Stomach (tissue), 19 donors: ENCODE measurements at regions of chr4 and their contacts with region 1.

Region 1: DNA sequence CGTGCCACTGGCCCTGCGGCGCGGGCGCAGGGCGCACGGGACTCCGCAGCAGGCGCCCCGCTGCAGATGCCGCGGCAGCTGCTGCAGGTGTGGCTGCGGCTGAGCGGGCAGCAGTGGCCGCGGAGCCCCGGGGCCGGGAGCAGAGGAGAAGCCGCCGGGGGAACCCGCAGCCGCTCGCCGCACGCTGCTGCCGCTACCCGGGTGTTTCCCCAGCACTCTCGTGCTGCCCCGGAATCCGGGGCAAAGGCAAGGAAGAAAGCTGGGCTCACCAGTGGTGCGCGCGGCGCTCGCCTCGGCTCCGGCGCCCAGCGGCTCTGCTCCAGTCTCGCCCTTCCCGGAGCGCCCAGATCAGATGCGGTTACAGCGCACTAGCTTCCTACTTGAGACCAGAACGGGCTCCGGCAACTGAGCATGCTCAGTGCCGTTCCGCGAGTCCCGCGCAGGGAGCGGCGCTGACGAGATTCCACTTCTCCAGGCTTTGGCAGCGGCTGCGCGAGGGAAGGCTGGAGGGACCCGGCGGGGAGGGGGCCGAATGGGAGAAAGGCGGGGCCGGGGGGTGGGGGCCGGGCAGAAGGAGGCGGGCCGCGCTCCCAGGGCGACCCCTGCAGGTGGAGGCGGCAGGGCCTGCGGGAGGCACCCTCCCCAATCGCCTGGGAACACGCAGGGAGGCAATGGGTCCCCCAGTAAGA is at the start of gene APBB2:
- DNase-seq: peak; percentile 94 to 99
- H3K4me3 ChIP-seq: peak within 1 kb of the TSS; percentile 81 to 96 (median 92)
- H3K27ac ChIP-seq: peak within 1 kb of the TSS; percentile 84 to 95 (median 90)
- H3K4me1 ChIP-seq: peaks cover 20 to 59% (median 40%) of the 10 kb centered on the region in 4 donors
- H3K27me3 ChIP-seq: peaks cover 0 to 10% (median 0%) of the 10 kb centered on the region in 3 donors
- CTCF ChIP-seq: peak in 4 of 7 experiments; percentile 50 to 91 (median 84)
- EP300 ChIP-seq: no peak
- POLR2A ChIP-seq: peak in 2 of 4 donors; percentile 46 to 64
- total RNA-seq, gene APBB2: 9.0 to 55.4 (median 41.1) TPM

Region 2: GRCh38 chr4:40924793-40925117 is 289.5 kb before region 1 on chr4:
- intact Hi-C with region 1: loop called (anchors 5 kb)
- DNase-seq: no peak
- H3K4me3 ChIP-seq: no peak overlapping the region
- H3K27ac ChIP-seq: no peak overlapping the region
- H3K4me1 ChIP-seq: peaks cover 0 to 4% (median 1%) of the 10 kb centered on the region in 4 donors
- H3K27me3 ChIP-seq: no peaks in the 10 kb centered on the region
- CTCF ChIP-seq: no peak
- EP300 ChIP-seq: no peak
- POLR2A ChIP-seq: no peak

Region 3: GRCh38 chr4:40976343-40976742 is 237.9 kb before region 1 on chr4:
- intact Hi-C with region 1: loop called (anchors 5 kb)
- DNase-seq: peak; percentile 43 to 80
- H3K4me3 ChIP-seq: no peak overlapping the region
- H3K27ac ChIP-seq: no peak overlapping the region
- H3K4me1 ChIP-seq: peaks cover 0 to 8% (median 3%) of the 10 kb centered on the region in 4 donors
- H3K27me3 ChIP-seq: no peaks in the 10 kb centered on the region
- CTCF ChIP-seq: peak in 5 of 7 experiments; percentile 46 to 66 (median 64)
- EP300 ChIP-seq: no peak
- POLR2A ChIP-seq: no peak